AG04450 (cell line): ENCODE measurements at regions of chr14 and their contacts with region 1.

Region 1: DNA sequence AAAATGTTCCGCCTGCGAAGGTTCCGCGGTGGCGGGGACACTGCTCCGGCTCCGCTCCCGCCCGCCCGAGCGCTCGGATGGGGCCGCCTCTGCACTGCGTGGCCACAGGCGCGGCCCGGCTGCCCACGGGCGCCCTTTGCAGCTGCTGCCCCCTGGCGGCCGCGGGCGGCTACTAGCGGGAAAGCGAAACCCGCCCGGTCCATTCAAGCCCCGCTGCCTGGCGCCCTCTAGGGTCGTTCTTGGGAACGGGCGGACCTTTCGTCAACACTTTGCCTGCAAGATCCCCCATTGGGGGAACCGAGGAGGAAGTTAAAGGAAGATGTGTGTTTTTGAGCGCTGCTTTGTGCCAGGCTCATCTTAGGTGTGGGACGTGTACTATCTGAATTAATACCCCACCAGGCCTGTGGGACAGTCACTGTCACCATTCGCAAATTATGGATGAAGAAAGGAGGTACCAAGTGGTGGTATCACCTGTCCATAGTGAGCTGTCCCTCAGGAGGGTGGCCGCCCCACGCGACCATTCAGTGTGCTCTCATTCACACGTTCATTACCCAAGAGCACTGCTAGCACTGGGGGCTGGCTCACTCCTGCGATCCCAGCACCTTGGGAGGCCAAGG is 19.4 kb downstream of the GPR132 start:
- DNase-seq: peak; percentile 44
- H3K4me3 ChIP-seq: no peak overlapping the region
- H3K27ac ChIP-seq: no peak overlapping the region
- H3K27me3 ChIP-seq: peaks cover 13% of the 10 kb centered on the region
- CTCF ChIP-seq: peak; percentile 99

Region 2: DNA sequence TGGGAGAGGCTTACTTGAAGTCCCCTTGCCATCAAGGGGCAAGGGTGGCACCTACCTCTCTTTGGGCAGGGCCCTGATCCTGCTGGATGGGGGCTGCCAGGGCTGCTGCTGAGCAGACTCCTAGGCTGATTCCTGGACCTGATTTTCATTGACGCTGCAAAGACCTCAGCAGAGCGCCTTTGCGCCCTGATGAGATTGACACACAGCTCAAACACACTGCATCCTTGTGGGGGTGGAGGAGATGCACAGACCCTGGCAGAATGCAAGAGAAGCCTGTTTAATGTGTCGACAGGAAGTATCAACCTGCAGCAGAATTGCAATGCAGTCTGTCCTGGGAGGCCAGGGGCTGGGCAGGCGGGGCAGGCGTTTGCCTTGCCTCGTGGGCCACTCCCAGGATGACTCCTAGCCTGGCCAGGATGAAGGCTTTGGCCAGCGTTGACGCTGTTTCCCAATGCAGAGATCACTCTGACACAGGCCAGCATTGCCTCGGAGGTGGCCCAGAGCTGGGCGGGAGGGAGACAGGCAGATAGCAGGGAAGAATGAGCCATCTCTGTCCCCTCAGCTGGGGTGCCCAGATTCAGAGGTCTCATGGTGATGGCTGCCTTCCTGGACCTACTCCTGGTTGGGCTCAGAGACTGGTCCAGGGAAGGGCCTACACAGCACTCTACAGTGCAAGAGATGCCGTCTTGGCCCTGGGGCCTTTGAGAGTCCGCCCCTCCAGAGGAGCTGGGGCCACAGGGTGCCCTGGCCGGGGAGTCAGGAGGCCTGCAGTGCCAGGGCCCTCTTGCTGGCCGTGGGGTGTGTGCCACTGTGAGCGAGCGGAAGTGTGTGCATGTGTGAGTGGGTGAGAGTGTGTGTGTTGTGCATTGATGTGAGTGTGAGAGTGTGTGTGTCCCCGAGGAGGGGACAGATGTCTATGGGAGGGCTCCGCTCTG is 799.1 kb before region 1 on chr14:
- CTCF ChIA-PET with region 1: no interaction called
- POLR2A ChIA-PET with region 1: no interaction called
- DNase-seq: no peak
- H3K4me3 ChIP-seq: no peak overlapping the region
- H3K27ac ChIP-seq: no peak overlapping the region
- H3K27me3 ChIP-seq: no peaks in the 10 kb centered on the region
- CTCF ChIP-seq: no peak

Region 3: GRCh38 chr14:104932676-104933631 is 112.9 kb before region 1 on chr14:
- CTCF ChIA-PET with region 1: interaction called, 11 read pairs
- POLR2A ChIA-PET with region 1: interaction called, 8 read pairs
- DNase-seq: peak; percentile 32
- H3K4me3 ChIP-seq: peak overlapping the region; percentile 48
- H3K27ac ChIP-seq: no peak overlapping the region
- H3K27me3 ChIP-seq: peaks cover 41% of the 10 kb centered on the region
- CTCF ChIP-seq: peak; percentile 61

Region 4: GRCh38 chr14:104976198-104977007 is 69.4 kb before region 1 on chr14:
- CTCF ChIA-PET with region 1: interaction called, 127 read pairs
- POLR2A ChIA-PET with region 1: no interaction called
- DNase-seq: peak; percentile 46
- H3K4me3 ChIP-seq: no peak overlapping the region
- H3K27ac ChIP-seq: no peak overlapping the region
- H3K27me3 ChIP-seq: no peaks in the 10 kb centered on the region
- CTCF ChIP-seq: peak; percentile 92

Region 5: DNA sequence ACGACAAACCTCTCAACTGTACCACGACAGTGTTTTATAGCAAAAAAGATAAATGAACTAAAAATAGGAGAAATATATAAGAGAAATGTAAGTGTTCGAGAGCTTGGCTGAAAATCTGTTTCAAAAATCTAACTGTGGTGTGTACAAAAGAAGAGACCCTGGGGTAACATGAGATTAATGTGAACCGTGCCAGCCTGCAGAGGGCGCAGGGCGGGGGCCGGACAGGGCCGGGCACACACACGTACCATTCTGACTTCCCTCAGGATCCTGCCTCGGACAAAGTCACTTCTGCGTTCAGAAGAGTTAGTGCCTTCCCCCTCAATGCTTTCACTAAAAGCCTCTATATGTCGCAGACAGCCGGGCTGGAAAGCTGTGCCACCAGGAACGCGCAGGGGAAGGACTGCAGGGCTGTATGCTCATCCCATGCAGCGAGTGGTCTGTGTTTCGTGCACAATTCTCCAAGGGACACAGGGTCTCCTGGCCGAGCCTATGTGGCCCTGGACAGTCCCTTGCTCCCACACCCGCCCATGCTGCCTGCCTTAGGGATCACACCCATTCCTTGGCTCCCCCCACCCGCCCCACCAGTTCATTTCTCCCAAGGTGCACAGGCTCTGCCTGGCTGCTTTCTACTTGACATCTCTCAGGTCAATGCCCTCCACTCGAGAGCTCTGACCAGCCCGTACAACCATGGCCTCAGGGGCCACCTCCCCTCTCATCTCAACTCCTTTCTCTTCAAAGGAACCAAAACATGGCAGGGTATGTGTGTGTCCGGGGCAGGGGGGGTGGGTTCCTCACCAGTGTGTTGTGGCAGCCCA is 33.4 kb before region 1 on chr14:
- CTCF ChIA-PET with region 1: interaction called, 14 read pairs
- POLR2A ChIA-PET with region 1: no interaction called
- DNase-seq: no peak
- H3K4me3 ChIP-seq: no peak overlapping the region
- H3K27ac ChIP-seq: peak overlapping the region; percentile 21
- H3K27me3 ChIP-seq: no peaks in the 10 kb centered on the region
- CTCF ChIP-seq: peak; percentile 20; the same call in 1 of the 2 replicates

Region 6: GRCh38 chr14:105034314-105035039 is 11.3 kb before region 1 on chr14:
- CTCF ChIA-PET with region 1: interaction called, 33 read pairs
- POLR2A ChIA-PET with region 1: no interaction called
- DNase-seq: no peak
- H3K4me3 ChIP-seq: no peak overlapping the region
- H3K27ac ChIP-seq: no peak overlapping the region
- H3K27me3 ChIP-seq: peaks cover 9% of the 10 kb centered on the region
- CTCF ChIP-seq: no peak

Region 7: GRCh38 chr14:105064721-105065143 is 18.9 kb after region 1 on chr14:
- CTCF ChIA-PET with region 1: interaction called, 17 read pairs
- POLR2A ChIA-PET with region 1: no interaction called
- DNase-seq: no peak
- H3K4me3 ChIP-seq: no peak overlapping the region
- H3K27ac ChIP-seq: no peak overlapping the region
- H3K27me3 ChIP-seq: peaks cover 4% of the 10 kb centered on the region
- CTCF ChIP-seq: no peak